Mammary epithelial cell (primary cell): ENCODE measurements at regions of chr2 and their contacts with region 1.

Region 1: GRCh38 chr2:200950378-200950777 is 13.1 kb downstream of the ORC2 start:
- DNase-seq: no peak
- H3K4me3 ChIP-seq: no peak overlapping the region
- H3K27ac ChIP-seq: no peak overlapping the region
- H3K4me1 ChIP-seq: peaks cover under 1% of the 10 kb centered on the region
- H3K27me3 ChIP-seq: no peaks in the 10 kb centered on the region
- CTCF ChIP-seq: no peak

Region 2: DNA sequence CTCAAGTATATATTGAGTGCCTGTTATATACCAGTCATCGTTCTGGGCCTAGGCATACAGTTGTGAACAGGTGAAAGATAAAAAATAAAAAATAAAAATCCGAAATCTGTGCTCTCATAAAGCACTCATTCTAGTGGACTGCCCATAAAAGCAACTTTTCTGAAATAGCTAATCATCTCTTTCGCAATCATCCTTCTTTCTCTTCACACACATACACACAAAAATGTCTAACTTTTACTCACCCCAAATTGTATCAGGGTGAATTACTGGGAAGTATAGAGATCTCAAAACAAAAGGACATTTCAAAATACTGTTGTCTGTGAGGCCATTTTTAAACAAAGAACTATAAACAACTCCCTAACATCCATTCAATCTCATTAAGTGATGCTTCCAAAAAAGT is 42.7 kb after region 1 on chr2:
- CTCF ChIA-PET with region 1: no interaction called
- dilution Hi-C with region 1: loop called (anchors 5 kb)
- in situ Hi-C with region 1: no loop called
- intact Hi-C with region 1: no loop called
- DNase-seq: no peak
- H3K4me3 ChIP-seq: no peak overlapping the region
- H3K27ac ChIP-seq: no peak overlapping the region
- H3K4me1 ChIP-seq: no peaks in the 10 kb centered on the region
- H3K27me3 ChIP-seq: no peaks in the 10 kb centered on the region
- CTCF ChIP-seq: no peak

Region 3: DNA sequence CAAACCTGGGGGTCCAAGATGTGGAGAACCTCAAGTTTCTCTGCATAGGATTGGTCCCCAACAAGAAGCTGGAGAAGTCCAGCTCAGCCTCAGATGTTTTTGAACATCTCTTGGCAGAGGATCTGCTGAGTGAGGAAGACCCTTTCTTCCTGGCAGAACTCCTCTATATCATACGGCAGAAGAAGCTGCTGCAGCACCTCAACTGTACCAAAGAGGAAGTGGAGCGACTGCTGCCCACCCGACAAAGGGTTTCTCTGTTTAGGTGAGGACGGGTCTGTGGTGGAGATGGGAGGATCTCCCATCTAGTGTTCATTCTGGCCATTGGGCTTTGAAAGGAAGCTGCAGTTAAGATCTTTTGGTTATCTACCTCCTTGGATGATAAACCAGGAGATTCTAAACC is 235.5 kb after region 1 on chr2:
- CTCF ChIA-PET with region 1: no interaction called
- dilution Hi-C with region 1: no loop called
- in situ Hi-C with region 1: no loop called
- intact Hi-C with region 1: no loop called
- DNase-seq: no peak
- H3K4me3 ChIP-seq: no peak overlapping the region
- H3K27ac ChIP-seq: no peak overlapping the region
- H3K4me1 ChIP-seq: peaks cover 5% of the 10 kb centered on the region
- H3K27me3 ChIP-seq: no peaks in the 10 kb centered on the region
- CTCF ChIP-seq: no peak